Thyroid gland (tissue), 4 donors: ENCODE measurements at regions of chr15 and their contacts with region 1.

Region 1: DNA sequence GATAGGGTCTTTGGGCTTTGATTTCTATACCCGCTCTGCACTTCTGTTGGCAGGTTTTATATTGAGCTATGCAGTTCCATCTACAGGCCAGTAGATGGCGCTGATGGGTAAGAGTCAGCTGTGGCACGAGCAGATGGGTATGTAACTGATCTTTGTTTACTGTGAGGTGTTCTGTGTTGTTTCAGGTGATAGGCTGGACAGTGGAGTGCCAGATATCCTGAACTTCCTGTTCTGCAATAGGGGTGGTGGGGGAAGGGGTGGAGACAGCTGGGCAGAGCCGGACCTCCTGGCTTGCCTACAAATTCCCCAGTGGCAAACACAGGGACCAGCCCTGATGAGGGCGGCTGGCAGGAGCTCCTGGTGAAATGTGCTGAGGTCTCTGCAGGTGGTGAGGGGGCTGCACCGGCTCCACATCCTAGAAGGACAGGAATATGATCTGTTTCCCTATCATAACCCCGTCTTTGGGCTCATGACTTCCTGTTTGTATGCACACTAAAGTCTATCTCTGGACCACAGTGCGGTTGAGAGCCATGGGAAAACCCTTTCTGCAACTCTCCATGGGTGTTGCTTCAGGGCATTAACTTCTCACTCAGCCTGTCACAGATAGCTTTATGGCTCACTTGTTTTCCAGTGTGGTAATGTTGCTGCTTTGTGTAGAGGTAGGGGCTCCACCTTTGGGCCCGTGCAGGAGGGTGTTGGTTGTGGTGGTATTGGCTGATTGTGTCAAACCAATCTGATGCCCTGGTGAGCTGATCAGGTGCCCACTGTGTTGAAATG is 13.4 kb upstream of the FAM98B start:
- DNase-seq: peak; percentile 20 to 36
- H3K4me3 ChIP-seq: no peak overlapping the region
- H3K27ac ChIP-seq: no peak overlapping the region
- H3K4me1 ChIP-seq: peaks cover 0 to 4% of the 10 kb centered on the region in 2 donors
- H3K27me3 ChIP-seq: no peaks in the 10 kb centered on the region
- CTCF ChIP-seq: peak; percentile 76 to 95 (median 84)
- POLR2A ChIP-seq: no peak

Region 2: GRCh38 chr15:38610748-38611147 is 170.2 kb after region 1 on chr15:
- intact Hi-C with region 1: no loop called
- DNase-seq: no peak
- H3K4me3 ChIP-seq: no peak overlapping the region
- H3K27ac ChIP-seq: no peak overlapping the region
- H3K4me1 ChIP-seq: no peaks in the 10 kb centered on the region
- H3K27me3 ChIP-seq: no peaks in the 10 kb centered on the region
- CTCF ChIP-seq: no peak
- POLR2A ChIP-seq: no peak

Region 3: GRCh38 chr15:38688761-38689160 is 248.2 kb after region 1 on chr15:
- intact Hi-C with region 1: loop called (anchors 5 kb)
- DNase-seq: no peak
- H3K4me3 ChIP-seq: no peak overlapping the region
- H3K27ac ChIP-seq: no peak overlapping the region
- H3K4me1 ChIP-seq: no peaks in the 10 kb centered on the region
- H3K27me3 ChIP-seq: no peaks in the 10 kb centered on the region
- CTCF ChIP-seq: no peak
- POLR2A ChIP-seq: no peak

Region 4: GRCh38 chr15:38758043-38758442 is 317.5 kb after region 1 on chr15:
- intact Hi-C with region 1: no loop called
- DNase-seq: no peak
- H3K4me3 ChIP-seq: no peak overlapping the region
- H3K27ac ChIP-seq: no peak overlapping the region
- H3K4me1 ChIP-seq: peaks cover 7 to 12% of the 10 kb centered on the region in 2 donors
- H3K27me3 ChIP-seq: peaks cover 9% of the 10 kb centered on the region
- CTCF ChIP-seq: no peak
- POLR2A ChIP-seq: no peak